PC-9 (cell line): ENCODE measurements at regions of chr7 and their contacts with region 1.

Region 1: GRCh38 chr7:17041324-17041723 is 159.5 kb upstream of the AGR3 start:
- DNase-seq: peak in 1 of 2 experiments; percentile 97
- H3K4me3 ChIP-seq: peak overlapping the region; percentile 11; the same call in 1 of the 2 replicates
- H3K27ac ChIP-seq: peak overlapping the region; percentile 97
- H3K4me1 ChIP-seq: peaks cover 83% of the 10 kb centered on the region
- H3K27me3 ChIP-seq: no peaks in the 10 kb centered on the region
- CTCF ChIP-seq: no peak

Region 2: GRCh38 chr7:16989811-16990413 is 51.4 kb before region 1 on chr7:
- CTCF ChIA-PET with region 1: no interaction called
- POLR2A ChIA-PET with region 1: no interaction called
- intact Hi-C with region 1: loop called (anchors 1 kb)
- DNase-seq: peak; percentile 92 to 99
- H3K4me3 ChIP-seq: peak overlapping the region; percentile 32; the same call in 1 of the 2 replicates
- H3K27ac ChIP-seq: peak overlapping the region; percentile 84
- H3K4me1 ChIP-seq: peaks cover 40% of the 10 kb centered on the region
- H3K27me3 ChIP-seq: no peaks in the 10 kb centered on the region
- CTCF ChIP-seq: no peak

Region 3: GRCh38 chr7:17130281-17131059 is 89.1 kb after region 1 on chr7:
- CTCF ChIA-PET with region 1: no interaction called
- POLR2A ChIA-PET with region 1: no interaction called
- intact Hi-C with region 1: loop called (anchors 1 kb)
- DNase-seq: peak; percentile 49 to 100
- H3K4me3 ChIP-seq: peak overlapping the region; percentile 17; the same call in 1 of the 2 replicates
- H3K27ac ChIP-seq: peak overlapping the region; percentile 59
- H3K4me1 ChIP-seq: peaks cover 20% of the 10 kb centered on the region
- H3K27me3 ChIP-seq: no peaks in the 10 kb centered on the region
- CTCF ChIP-seq: no peak

Region 4: DNA sequence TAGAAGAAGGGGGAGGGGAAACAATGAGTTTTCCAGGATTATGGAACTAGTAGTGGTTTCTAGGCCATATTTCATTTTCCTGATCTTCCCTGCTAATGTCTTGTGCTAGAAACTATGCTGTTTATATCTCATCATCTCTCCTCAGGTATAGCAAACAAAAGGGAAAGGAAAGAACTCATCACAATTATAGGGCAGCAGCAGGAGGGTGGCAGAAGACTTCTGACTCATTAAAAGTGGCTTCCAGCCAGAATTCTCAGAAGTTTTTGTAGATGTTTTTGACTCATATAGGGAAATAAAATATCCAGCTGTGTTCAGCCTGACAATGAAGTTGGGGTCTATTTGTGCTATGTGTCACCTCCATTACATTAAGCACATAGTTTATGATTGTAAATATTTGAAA is 263.6 kb after region 1 on chr7:
- CTCF ChIA-PET with region 1: no interaction called
- POLR2A ChIA-PET with region 1: no interaction called
- intact Hi-C with region 1: loop called (anchors 2 kb)
- DNase-seq: peak; percentile 60 to 97
- H3K4me3 ChIP-seq: peak overlapping the region; percentile 15
- H3K27ac ChIP-seq: peak overlapping the region; percentile 66
- H3K4me1 ChIP-seq: peaks cover 76% of the 10 kb centered on the region
- H3K27me3 ChIP-seq: no peaks in the 10 kb centered on the region
- CTCF ChIP-seq: no peak

Region 5: GRCh38 chr7:17646253-17646956 is 605.1 kb after region 1 on chr7:
- CTCF ChIA-PET with region 1: interaction called, 11 read pairs
- POLR2A ChIA-PET with region 1: no interaction called
- intact Hi-C with region 1: no loop called
- DNase-seq: peak; percentile 4 to 43
- H3K4me3 ChIP-seq: no peak overlapping the region
- H3K27ac ChIP-seq: no peak overlapping the region
- H3K4me1 ChIP-seq: no peaks in the 10 kb centered on the region
- H3K27me3 ChIP-seq: no peaks in the 10 kb centered on the region
- CTCF ChIP-seq: peak; percentile 71